ENCODE measurements at regions of chr22 and their contacts with region 1.

Region 1: DNA sequence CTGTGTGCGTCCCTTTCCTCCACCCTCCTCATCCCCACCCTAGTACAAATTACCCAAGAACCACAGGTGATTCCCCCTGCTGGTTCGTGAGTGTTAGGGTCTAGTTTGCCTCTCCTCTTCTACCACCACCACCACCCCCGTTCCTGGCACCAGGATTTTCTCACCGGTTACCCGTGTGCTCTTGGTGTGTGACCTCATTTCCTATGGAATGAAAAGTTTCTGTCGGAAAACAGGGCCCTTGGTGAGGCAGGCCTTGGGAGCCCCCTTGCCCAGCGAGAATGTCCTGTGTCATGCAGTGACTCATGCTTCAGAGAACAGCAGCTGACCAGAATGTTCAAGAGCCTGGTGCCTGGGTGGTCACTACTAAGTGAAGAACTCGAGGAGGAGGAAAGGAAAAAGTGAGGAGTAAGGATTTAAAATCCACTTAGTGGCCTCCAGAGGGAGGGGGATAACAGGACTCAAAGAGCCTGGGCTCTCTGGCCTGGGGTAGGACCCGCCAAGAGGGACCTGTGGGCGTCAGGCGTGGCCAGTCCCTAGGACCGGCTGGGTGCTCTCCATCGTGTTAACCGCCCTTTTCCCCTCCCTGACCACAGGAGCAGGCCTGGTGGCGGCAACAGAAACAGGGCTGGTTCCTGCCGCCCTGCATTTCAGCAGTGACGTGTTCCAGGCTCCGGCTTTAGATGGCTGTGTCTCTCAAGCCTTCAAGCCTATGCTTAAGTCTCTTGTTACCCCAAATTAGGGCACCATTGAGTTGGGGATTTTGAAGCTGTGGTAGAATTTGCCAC is 30.2 kb downstream of the C22orf31 start:
- DNase-seq: peak; percentile 93
- ATAC-seq: peak; percentile 74
- H3K4me3 ChIP-seq: peak overlapping the region; percentile 18 to 51 (median 36); a peak in 4 of 6 replicates
- H3K27ac ChIP-seq: peak overlapping the region; percentile 88
- H3K4me1 ChIP-seq: peaks cover 95% of the 10 kb centered on the region
- H3K27me3 ChIP-seq: no peaks in the 10 kb centered on the region
- CTCF ChIP-seq: no peak
- EP300 ChIP-seq: peak in 1 of 2 experiments; percentile 68; a peak in 2 of 4 replicates
- POLR2A ChIP-seq: 0 out of 4 replicates have a peak, but pooled peaks of 1 of the 2 experiments have one; percentile 25
- RAD21 ChIP-seq: no peak

Region 2: GRCh38 chr22:28917747-28918549 is 113.5 kb before region 1 on chr22:
- CTCF ChIA-PET with region 1: no interaction called
- POLR2A ChIA-PET with region 1: interaction called, 44 read pairs
- in situ Hi-C with region 1: loop called (anchors 5 kb)
- intact Hi-C with region 1: loop called (anchors 2 kb)
- DNase-seq: peak; percentile 86
- ATAC-seq: peak; percentile 72
- H3K4me3 ChIP-seq: peak overlapping the region in 1 of 3 experiments; percentile 44; a peak in 2 of 6 replicates
- H3K27ac ChIP-seq: peak overlapping the region; percentile 81
- H3K4me1 ChIP-seq: peaks cover 100% of the 10 kb centered on the region
- H3K27me3 ChIP-seq: no peaks in the 10 kb centered on the region
- CTCF ChIP-seq: peak; percentile 23; the same call in 1 of the 2 replicates
- EP300 ChIP-seq: peak in 1 of 2 experiments; percentile 91; a peak in 2 of 4 replicates
- POLR2A ChIP-seq: 0 out of 4 replicates have a peak, but pooled peaks of 1 of the 2 experiments have one; percentile 18
- RAD21 ChIP-seq: 0 out of 2 replicates have a peak, but pooled peaks have one; percentile 37

Region 3: GRCh38 chr22:28931844-28932567 is 99.4 kb before region 1 on chr22:
- CTCF ChIA-PET with region 1: no interaction called
- POLR2A ChIA-PET with region 1: interaction called, 11 read pairs
- in situ Hi-C with region 1: no loop called
- intact Hi-C with region 1: no loop called
- DNase-seq: peak; percentile 63
- ATAC-seq: peak; percentile 76
- H3K4me3 ChIP-seq: peak overlapping the region in 1 of 3 experiments; percentile 16; a peak in 1 of 6 replicates
- H3K27ac ChIP-seq: peak overlapping the region; percentile 55
- H3K4me1 ChIP-seq: peaks cover 98% of the 10 kb centered on the region
- H3K27me3 ChIP-seq: no peaks in the 10 kb centered on the region
- CTCF ChIP-seq: no peak
- EP300 ChIP-seq: peak in 1 of 2 experiments; percentile 69; a peak in 2 of 4 replicates
- POLR2A ChIP-seq: no peak
- RAD21 ChIP-seq: no peak

Region 4: GRCh38 chr22:28983787-28984441 is 47.5 kb before region 1 on chr22:
- CTCF ChIA-PET with region 1: no interaction called
- POLR2A ChIA-PET with region 1: interaction called, 26 read pairs
- in situ Hi-C with region 1: no loop called
- intact Hi-C with region 1: no loop called
- DNase-seq: no peak
- ATAC-seq: no peak
- H3K4me3 ChIP-seq: no peak overlapping the region
- H3K27ac ChIP-seq: peak overlapping the region; percentile 87
- H3K4me1 ChIP-seq: peaks cover 99% of the 10 kb centered on the region
- H3K27me3 ChIP-seq: no peaks in the 10 kb centered on the region
- CTCF ChIP-seq: no peak
- EP300 ChIP-seq: no peak
- POLR2A ChIP-seq: no peak
- RAD21 ChIP-seq: no peak

Region 5: GRCh38 chr22:29004647-29005371 is 26.6 kb before region 1 on chr22:
- CTCF ChIA-PET with region 1: no interaction called
- POLR2A ChIA-PET with region 1: interaction called, 37 read pairs
- in situ Hi-C with region 1: no loop called
- intact Hi-C with region 1: loop called (anchors 2 kb)
- DNase-seq: peak; percentile 90
- ATAC-seq: peak; percentile 93
- H3K4me3 ChIP-seq: peak overlapping the region; percentile 0 to 64 (median 51); a peak in 5 of 6 replicates
- H3K27ac ChIP-seq: peak overlapping the region; percentile 89
- H3K4me1 ChIP-seq: peaks cover 97% of the 10 kb centered on the region
- H3K27me3 ChIP-seq: no peaks in the 10 kb centered on the region
- CTCF ChIP-seq: no peak
- EP300 ChIP-seq: peak in 1 of 2 experiments; percentile 71; a peak in 2 of 4 replicates
- POLR2A ChIP-seq: 0 out of 4 replicates have a peak, but pooled peaks of 1 of the 2 experiments have one; percentile 8
- RAD21 ChIP-seq: no peak

Region 6: DNA sequence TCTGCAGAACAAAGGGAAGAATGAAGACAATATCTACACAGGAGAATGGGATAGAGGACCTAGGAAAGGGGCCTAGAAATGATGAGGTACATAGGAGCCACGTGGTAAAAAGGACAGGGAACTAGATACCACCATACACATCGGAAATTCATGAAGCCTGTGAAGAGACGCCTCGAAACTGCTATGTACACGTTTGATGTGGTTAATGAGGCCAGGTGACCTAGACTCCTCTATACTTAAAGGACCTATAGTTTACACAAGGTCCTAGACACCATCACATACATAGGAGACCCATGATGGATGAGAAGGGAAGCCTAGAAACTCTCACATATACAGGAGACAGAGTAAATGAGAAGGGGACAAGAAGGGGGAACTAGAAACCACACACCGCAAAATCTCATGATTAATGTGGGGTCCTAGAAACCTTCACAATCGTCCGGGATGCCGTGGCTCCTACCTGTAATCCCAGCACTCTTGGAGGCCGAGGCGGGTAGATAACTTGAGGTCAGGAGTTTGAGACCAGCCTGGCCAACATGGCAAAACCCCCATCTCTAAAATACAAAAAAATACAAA is 212.5 kb after region 1 on chr22:
- CTCF ChIA-PET with region 1: no interaction called
- POLR2A ChIA-PET with region 1: no interaction called
- in situ Hi-C with region 1: no loop called
- intact Hi-C with region 1: no loop called
- DNase-seq: no peak
- ATAC-seq: no peak
- H3K4me3 ChIP-seq: no peak overlapping the region
- H3K27ac ChIP-seq: no peak overlapping the region
- H3K4me1 ChIP-seq: peaks cover 16% of the 10 kb centered on the region
- H3K27me3 ChIP-seq: 0 out of 5 replicates have a peak, but pooled peaks cover 0 to 8% of the 10 kb centered on the region in 2 experiments
- CTCF ChIP-seq: no peak
- EP300 ChIP-seq: no peak
- POLR2A ChIP-seq: no peak
- RAD21 ChIP-seq: no peak